GM13976 (cell line): ENCODE measurements at regions of chr20 and their contacts with region 1.

Region 1: DNA sequence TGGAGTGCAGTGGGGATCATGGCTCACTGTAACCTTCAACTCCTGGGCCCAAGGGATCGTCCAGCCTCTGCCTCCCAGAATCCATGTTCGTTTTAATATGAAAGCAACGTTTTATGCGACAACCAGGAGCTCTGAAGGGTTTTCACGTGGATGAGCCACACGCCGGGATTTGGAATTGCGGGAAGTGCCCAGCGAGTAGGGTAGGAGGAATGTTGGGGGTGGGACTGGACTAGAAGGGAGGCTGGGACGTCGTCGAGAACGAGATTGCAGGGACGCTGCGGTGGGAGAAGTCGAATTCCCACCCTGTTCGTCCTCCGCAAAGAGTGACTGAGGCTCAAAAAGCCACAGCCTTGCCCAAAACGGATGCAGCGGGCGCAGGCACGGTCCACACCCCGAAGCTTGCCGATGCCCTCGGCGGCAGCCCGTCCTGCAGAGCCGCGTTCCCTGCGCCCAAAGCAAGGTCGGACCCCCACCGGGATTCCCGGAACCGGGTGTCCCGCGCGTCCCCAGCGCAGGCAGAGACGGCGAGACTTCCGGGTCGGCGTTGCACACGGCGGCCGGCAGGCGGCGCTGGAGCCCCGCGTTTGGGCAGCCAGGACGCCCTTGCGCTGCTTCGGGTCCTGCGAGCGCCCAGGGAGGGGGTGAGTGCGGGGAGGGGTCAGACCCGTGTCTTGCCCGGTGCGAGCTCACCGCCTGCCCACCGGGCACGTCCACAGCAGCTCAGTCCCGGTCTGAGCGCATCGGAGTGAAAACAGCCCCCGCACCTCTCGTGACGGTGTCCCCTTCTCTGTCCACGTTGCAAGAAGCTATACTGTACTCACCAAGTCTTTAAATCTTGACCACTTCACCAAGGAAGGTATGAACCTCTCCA is 87.8 kb downstream of the DHX35 start:
- DNase-seq: peak; percentile 90
- CTCF ChIP-seq: peak; percentile 100

Region 2: GRCh38 chr20:38633577-38634093 is 416.3 kb before region 1 on chr20:
- in situ Hi-C with region 1: no loop called
- DNase-seq: peak; percentile 85
- CTCF ChIP-seq: peak; percentile 95

Region 3: DNA sequence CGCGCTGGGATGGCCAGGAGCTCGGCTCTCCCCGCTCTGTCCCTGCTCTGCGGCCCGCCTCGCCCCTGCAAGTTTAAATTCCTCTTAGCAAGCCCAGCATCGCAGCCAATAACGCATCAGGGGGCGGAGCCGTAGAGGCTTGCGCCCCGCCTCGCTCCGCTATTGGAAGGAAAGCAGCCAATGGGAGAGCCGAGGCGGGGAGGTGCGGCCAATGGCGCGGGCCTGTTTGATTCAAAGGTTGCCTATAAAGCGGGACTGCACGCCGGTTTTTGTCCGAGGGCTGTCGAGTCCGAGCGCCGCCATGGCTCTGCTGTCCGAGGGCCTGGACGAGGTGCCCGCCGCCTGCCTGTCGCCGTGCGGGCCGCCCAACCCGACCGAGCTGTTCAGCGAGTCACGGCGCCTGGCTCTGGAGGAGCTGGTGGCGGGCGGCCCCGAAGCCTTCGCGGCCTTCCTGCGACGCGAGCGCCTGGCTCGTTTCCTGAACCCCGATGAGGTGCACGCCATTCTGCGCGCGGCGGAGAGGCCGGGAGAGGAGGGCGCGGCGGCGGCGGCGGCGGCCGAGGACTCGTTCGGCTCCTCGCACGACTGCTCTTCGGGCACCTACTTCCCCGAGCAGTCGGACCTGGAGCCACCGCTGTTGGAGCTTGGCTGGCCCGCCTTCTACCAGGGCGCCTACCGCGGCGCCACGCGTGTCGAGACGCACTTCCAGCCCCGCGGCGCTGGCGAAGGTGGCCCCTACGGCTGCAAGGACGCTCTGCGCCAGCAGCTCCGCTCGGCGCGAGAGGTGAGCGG is 123.6 kb before region 1 on chr20 and contains the start of gene FAM83D:
- in situ Hi-C with region 1: loop called (anchors 10 kb)
- DNase-seq: peak; percentile 100
- CTCF ChIP-seq: no peak